ENCODE measurements at regions of chr7 and their contacts with region 1.

Region 1: GRCh38 chr7:36291387-36292316 is 98.0 kb upstream of the ANLN start:
- DNase-seq: peak; percentile 56 to 88 (median 70)
- ATAC-seq: peak; percentile 27
- H3K4me3 ChIP-seq: peak overlapping the region; percentile 26
- H3K4me3 Mint-ChIP-seq: peak overlapping the region; percentile 65
- H3K27ac ChIP-seq: no peak overlapping the region
- H3K27ac Mint-ChIP-seq: peak overlapping the region; percentile 59
- H3K4me1 ChIP-seq: peaks cover 45% of the 10 kb centered on the region
- H3K4me1 Mint-ChIP-seq: peaks cover 46% of the 10 kb centered on the region
- H3K27me3 ChIP-seq: no peaks in the 10 kb centered on the region
- H3K27me3 Mint-ChIP-seq: no peaks in the 10 kb centered on the region
- CTCF ChIP-seq: peak; percentile 96

Region 2: DNA sequence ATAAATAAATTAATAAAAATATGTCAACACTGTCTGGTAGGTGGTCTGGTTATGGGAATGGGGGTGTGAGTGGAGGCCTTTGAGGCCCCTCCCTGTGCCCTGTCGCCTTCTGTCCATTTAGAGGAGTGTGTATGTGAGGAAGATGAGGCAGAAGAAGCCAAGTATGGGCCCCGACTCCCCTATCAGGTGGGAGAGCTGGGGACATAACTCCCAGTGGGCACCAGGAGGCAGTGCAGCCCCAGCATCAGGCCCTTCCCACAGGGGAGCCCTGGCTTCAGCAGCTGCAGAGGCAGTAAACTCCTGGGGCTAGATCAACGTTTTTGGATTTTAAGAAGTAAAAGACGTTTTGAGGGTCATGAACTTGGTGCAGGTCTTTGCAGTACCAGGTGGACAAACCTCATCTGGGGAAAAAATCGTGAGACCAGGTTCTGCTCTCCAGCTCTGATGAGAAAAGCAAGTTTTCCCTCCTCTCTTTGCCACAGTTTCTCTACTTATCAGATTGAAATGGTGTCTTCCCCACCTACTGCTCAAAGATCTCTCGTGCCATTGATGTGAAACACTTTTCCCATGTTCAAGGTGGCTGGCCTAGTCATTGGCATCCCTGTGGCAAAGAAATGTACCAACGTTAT is 306.4 kb before region 1 on chr7:
- CTCF ChIA-PET with region 1: interaction called, 37 read pairs
- POLR2A ChIA-PET with region 1: interaction called, 8 read pairs
- intact Hi-C with region 1: loop called (anchors 1 kb)
- DNase-seq: peak; percentile 71 to 88 (median 75)
- ATAC-seq: peak; percentile 100
- H3K4me3 ChIP-seq: no peak overlapping the region
- H3K4me3 Mint-ChIP-seq: no peak overlapping the region
- H3K27ac ChIP-seq: no peak overlapping the region
- H3K27ac Mint-ChIP-seq: no peak overlapping the region
- H3K4me1 ChIP-seq: no peaks in the 10 kb centered on the region
- H3K4me1 Mint-ChIP-seq: no peaks in the 10 kb centered on the region
- H3K27me3 ChIP-seq: no peaks in the 10 kb centered on the region
- H3K27me3 Mint-ChIP-seq: no peaks in the 10 kb centered on the region
- CTCF ChIP-seq: peak; percentile 91

Region 3: GRCh38 chr7:36128448-36129047 is 163.1 kb before region 1 on chr7:
- CTCF ChIA-PET with region 1: no interaction called
- POLR2A ChIA-PET with region 1: no interaction called
- intact Hi-C with region 1: loop called in 1 of 2 experiments (anchors 5 kb)
- DNase-seq: peak in 2 of 14 experiments; percentile 24 to 27
- ATAC-seq: no peak
- H3K4me3 ChIP-seq: no peak overlapping the region
- H3K4me3 Mint-ChIP-seq: no peak overlapping the region
- H3K27ac ChIP-seq: no peak overlapping the region
- H3K27ac Mint-ChIP-seq: no peak overlapping the region
- H3K4me1 ChIP-seq: peaks cover 17% of the 10 kb centered on the region
- H3K4me1 Mint-ChIP-seq: peaks cover 6% of the 10 kb centered on the region
- H3K27me3 ChIP-seq: no peaks in the 10 kb centered on the region
- H3K27me3 Mint-ChIP-seq: no peaks in the 10 kb centered on the region
- CTCF ChIP-seq: peak; percentile 65

Region 4: GRCh38 chr7:36207451-36208291 is 84.0 kb before region 1 on chr7:
- CTCF ChIA-PET with region 1: interaction called, 3 read pairs
- POLR2A ChIA-PET with region 1: interaction called, 3 read pairs
- intact Hi-C with region 1: loop called in 1 of 2 experiments (anchors 5 kb)
- DNase-seq: peak in 12 of 14 experiments; percentile 4 to 78 (median 30)
- ATAC-seq: peak; percentile 55
- H3K4me3 ChIP-seq: no peak overlapping the region
- H3K4me3 Mint-ChIP-seq: peak overlapping the region; percentile 27
- H3K27ac ChIP-seq: peak overlapping the region in 1 of 2 donors; percentile 48
- H3K27ac Mint-ChIP-seq: peak overlapping the region; percentile 79
- H3K4me1 ChIP-seq: peaks cover 57% of the 10 kb centered on the region
- H3K4me1 Mint-ChIP-seq: peaks cover 63% of the 10 kb centered on the region
- H3K27me3 ChIP-seq: no peaks in the 10 kb centered on the region
- H3K27me3 Mint-ChIP-seq: no peaks in the 10 kb centered on the region
- CTCF ChIP-seq: no peak

Region 5: DNA sequence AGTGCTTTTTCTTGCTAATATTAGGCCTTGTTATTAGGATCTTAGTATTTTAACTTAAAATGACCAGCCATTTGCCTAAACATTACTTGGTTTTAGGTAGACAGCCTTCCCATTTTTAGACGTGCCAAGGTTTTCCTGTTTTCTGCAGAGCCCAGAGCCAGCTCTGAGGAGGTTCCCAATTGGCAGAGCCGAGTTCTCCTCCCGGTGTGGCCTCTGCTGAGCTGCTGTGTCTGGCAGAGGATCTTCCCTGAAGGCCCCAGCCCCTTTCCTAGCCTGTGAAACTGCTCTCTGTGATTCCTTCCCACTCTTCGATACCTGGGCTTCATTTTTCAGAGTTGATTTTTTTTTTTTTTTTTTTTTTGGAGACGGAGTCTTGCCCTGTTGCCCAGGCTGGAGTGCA is 47.2 kb before region 1 on chr7:
- CTCF ChIA-PET with region 1: no interaction called
- POLR2A ChIA-PET with region 1: no interaction called
- intact Hi-C with region 1: no loop called
- DNase-seq: no peak
- ATAC-seq: no peak
- H3K4me3 ChIP-seq: no peak overlapping the region
- H3K4me3 Mint-ChIP-seq: no peak overlapping the region
- H3K27ac ChIP-seq: no peak overlapping the region
- H3K27ac Mint-ChIP-seq: no peak overlapping the region
- H3K4me1 ChIP-seq: no peaks in the 10 kb centered on the region
- H3K4me1 Mint-ChIP-seq: no peaks in the 10 kb centered on the region
- H3K27me3 ChIP-seq: no peaks in the 10 kb centered on the region
- H3K27me3 Mint-ChIP-seq: no peaks in the 10 kb centered on the region
- CTCF ChIP-seq: no peak

Measured in CD4-positive, alpha-beta T cell (primary cell).